Psoas muscle (tissue), 8 donors: ENCODE measurements at regions of chr3 and their contacts with region 1.

Region 1: DNA sequence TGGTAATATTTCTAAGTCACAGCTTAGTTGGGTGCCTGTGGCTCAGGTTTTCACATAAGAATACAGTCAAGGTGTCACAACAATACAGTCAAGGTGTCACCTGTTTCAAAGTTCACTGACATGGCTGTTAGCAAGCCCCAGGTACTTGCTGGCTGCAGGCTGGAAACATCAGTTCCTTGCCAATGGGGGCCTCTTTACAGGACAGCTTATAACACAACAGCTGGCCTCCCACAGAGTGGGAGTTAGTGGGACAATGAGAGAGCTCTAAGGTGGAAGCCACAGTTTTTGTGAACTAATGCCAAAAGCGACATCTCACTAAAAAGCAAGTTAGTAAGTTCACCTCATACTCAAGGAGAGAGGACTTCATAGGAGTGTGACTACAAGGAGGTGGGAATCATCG is 45.4 kb downstream of the GPR156 start:
- DNase-seq: no peak
- ATAC-seq: no peak
- H3K4me3 ChIP-seq: no peak overlapping the region
- H3K27ac ChIP-seq: no peak overlapping the region
- H3K4me1 ChIP-seq: no peaks in the 10 kb centered on the region
- H3K27me3 ChIP-seq: no peaks in the 10 kb centered on the region
- CTCF ChIP-seq: no peak

Region 2: DNA sequence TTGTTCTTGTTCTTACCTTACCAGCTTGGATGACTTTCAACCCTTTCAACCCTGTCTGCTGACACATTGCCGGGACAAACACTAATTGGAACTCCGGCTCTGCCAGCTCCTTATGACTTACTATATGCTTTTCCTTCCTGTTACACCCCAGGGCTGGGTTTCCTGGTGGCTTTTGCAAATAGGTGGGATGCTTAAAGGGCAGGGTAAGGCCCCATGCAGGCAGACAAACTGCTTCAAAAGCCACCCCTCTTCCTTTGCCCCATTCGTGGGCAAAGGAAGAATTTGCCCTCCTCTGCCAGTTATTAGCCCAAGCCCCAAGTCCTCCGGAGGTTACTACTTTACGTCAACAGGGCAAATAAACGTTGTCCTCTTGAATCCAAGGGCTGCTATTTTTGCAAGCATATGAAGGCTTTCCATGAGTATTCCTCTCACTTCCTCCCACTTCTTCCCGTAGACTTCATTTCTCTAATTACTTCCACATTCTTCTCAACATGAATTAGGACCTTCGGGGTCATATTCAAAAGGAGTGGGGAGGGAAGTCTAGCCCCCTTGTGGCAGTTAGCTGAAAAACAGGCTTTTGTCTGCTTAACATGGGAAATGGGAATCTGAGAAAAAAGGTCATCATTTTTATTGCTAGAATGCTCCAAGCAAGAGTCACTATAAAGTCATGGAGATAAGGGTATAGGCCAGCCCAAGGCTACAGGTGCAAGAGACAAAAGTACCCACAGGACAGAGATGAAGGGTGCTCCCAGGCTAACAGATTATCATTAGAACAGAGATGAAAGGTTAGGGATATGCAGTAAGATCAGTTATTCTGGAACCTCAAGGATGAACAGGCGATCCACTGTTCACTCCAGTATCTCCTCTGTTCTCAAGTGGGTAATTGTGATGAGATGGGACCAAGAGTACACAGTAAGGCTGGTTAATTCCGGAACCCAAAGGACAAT is 267.5 kb after region 1 on chr3:
- intact Hi-C with region 1: loop called in 1 of 2 experiments (anchors 5 kb)
- DNase-seq: no peak
- ATAC-seq: peak in 2 of 4 donors; percentile 30 to 63
- H3K4me3 ChIP-seq: no peak overlapping the region
- H3K27ac ChIP-seq: no peak overlapping the region
- H3K4me1 ChIP-seq: no peaks in the 10 kb centered on the region
- H3K27me3 ChIP-seq: no peaks in the 10 kb centered on the region
- CTCF ChIP-seq: peak; percentile 53